ENCODE measurements at regions of chr11 and their contacts with region 1.

Region 1: DNA sequence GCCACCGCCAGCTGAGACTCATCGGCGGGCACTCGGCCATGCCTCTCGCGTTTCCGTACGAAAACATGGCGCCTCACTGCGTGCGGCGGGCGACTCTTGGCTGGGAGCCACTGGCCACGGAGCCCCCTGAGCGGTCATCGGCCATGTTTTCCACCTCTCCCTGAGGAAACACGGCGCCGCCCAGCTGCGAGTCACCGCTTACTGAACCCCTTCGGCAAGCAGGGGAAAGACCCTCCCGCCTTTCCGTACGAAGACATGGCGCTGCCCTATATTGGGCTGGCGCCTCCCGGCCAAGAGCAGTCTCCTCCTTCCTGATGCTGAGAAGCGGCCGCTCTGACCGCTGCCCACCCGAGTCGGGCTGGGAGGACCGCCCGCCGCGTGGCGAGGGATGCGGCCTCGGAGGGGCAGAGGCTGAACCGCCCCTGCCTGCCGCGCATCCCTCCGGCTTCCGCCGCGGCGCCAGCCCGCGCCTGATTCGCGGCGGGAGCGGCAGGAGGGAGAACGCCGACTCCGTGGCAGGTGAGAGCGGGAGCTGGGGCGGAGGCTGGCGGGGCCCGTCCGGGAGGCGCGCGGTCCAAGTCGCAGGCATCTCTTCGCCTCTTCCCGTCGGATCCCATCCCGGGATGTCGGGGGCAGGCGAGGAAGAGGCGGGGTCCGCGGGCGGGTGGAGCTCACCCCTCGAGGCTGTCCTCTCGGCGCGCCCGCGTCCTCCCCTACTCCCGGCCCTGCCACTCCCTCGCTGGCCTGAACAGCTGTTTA is at the start of gene TCP11L1:
- DNase-seq: peak; percentile 72
- H3K4me3 Mint-ChIP-seq: peak within 1 kb of the TSS; percentile 93
- H3K27ac Mint-ChIP-seq: peak within 1 kb of the TSS; percentile 90
- H3K4me1 Mint-ChIP-seq: peaks cover 20% of the 10 kb centered on the region
- H3K27me3 Mint-ChIP-seq: peaks cover 13% of the 10 kb centered on the region
- total RNA-seq, gene TCP11L1: 15.0 and 16.1 TPM in 2 replicates

Region 2: DNA sequence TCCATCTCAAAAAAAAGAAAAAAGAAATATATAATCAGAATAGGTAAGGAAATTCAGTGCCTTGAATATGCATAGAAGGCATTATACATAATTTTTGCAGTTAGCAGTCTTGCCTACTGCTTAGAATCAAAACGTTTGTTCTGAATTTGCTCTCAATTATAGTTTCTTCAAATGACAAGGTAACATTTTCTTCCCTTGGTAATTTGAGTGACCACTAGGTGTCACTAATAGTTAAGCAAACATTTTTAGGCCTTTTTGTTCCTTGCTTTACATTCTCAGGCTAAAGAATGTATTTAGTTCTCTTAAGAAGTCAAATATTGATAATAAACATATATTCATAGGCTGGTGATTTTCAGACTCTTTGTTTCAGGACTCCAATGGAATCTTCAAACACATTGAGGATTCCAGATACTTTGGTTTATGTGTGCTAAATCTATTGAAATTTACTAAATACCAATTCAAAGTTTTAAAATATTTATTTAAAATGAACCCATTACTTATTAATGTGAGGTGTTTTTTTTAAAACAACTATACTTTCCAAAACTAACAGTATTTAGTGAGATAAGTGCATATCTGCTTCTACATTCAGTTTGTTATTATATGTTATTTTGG is 78.8 kb before region 1 on chr11:
- intact Hi-C with region 1: loop called (anchors 1 kb)
- DNase-seq: no peak
- H3K4me3 Mint-ChIP-seq: no peak overlapping the region
- H3K27ac Mint-ChIP-seq: no peak overlapping the region
- H3K4me1 Mint-ChIP-seq: peaks cover 13% of the 10 kb centered on the region
- H3K27me3 Mint-ChIP-seq: no peaks in the 10 kb centered on the region

Region 3: GRCh38 chr11:33065445-33066178 is 26.2 kb after region 1 on chr11:
- intact Hi-C with region 1: loop called (anchors 1 kb)
- DNase-seq: peak; percentile 47
- H3K4me3 Mint-ChIP-seq: no peak overlapping the region
- H3K27ac Mint-ChIP-seq: no peak overlapping the region
- H3K4me1 Mint-ChIP-seq: peaks cover 49% of the 10 kb centered on the region
- H3K27me3 Mint-ChIP-seq: no peaks in the 10 kb centered on the region

Region 4: DNA sequence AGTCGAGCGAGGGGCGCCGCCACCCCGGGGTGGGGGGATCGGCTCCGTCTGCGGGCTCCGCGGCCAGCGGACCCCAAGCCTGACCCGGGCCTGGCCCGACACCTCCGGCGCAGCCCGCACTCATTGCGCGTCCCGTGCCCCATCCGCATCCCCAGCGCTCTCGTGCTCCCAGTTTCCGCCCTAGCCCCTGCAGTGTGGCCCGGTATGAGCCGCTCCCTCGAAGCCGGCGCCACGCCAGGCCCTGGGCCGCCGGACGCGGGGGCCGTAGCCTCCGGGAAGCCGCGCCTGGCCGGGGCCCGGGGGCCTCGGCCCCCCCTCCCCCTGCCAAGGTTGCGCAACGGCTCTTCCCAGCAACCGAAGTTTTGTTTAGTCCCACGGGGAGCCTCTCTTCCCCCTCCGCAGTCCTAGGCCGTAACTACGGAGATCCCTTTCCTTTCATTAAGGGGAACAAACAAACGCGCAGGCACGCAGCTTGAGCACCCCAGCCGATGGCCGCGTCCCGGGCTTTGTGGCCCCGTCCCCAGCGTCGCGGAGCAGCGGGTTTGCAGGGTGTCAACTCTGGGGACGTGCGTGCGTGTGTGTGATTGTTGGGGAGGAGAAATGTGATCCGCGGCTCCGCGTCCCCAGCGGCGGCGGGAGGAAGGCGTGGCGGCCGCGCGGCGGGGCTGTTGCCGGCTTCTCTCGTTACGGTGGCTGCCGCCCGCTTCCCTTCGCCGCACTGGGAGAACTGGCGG is 218.6 kb after region 1 on chr11:
- intact Hi-C with region 1: loop called (anchors 5 kb)
- DNase-seq: peak; percentile 72
- H3K4me3 Mint-ChIP-seq: peak overlapping the region; percentile 99
- H3K27ac Mint-ChIP-seq: peak overlapping the region; percentile 99
- H3K4me1 Mint-ChIP-seq: peaks cover 46% of the 10 kb centered on the region
- H3K27me3 Mint-ChIP-seq: peaks cover 2% of the 10 kb centered on the region

Region 5: DNA sequence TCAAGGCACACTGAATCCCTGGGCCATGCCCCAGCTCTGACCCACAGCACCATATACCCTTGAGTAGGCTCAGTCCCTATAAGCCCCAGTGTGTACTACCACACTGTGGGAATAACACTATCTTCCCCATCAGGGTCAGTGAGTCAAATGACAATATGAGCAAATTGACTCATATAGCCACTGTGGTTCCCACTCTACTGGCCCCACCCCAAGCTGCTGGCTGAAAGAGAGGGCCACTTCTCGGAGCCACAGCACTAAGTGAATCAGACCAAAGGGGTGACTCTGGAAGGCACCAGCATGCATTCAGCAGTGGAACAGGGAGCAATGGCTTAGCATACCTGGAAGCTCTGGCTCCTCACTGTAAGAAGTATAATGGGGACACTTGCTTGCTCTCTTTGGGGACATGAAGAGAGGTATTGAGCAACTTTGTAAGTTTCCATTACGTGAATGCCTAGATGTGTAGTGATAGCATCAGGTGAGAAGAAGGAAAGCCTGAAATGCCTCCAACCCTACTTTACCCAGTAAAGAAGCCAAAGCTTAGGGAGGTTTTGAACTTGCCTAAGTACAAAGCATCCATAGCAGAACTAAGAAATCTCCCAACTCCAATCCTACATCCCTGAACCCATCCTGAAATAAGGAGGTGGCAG is 683.2 kb after region 1 on chr11:
- intact Hi-C with region 1: loop called (anchors 5 kb)
- DNase-seq: peak; percentile 41
- H3K4me3 Mint-ChIP-seq: peak overlapping the region; percentile 61
- H3K27ac Mint-ChIP-seq: peak overlapping the region; percentile 68
- H3K4me1 Mint-ChIP-seq: peaks cover 77% of the 10 kb centered on the region
- H3K27me3 Mint-ChIP-seq: peaks cover 1% of the 10 kb centered on the region

Measured in activated T-helper 1 cell treated with anti-CD3 and anti-CD28 coated beads, Interleukin-12 subunit alpha, Interleukin-12 subunit beta, Interleukin-2, Interleukin-4 antibody, amounts not matched to agents 30 ng/mL and 10 ng/mL and 1 ng/mL, durations not matched to agents 14 hours and 24 hours and 36 hours (primary cell).